ENCODE measurements at regions of chr9 and their contacts with region 1.

Region 1: DNA sequence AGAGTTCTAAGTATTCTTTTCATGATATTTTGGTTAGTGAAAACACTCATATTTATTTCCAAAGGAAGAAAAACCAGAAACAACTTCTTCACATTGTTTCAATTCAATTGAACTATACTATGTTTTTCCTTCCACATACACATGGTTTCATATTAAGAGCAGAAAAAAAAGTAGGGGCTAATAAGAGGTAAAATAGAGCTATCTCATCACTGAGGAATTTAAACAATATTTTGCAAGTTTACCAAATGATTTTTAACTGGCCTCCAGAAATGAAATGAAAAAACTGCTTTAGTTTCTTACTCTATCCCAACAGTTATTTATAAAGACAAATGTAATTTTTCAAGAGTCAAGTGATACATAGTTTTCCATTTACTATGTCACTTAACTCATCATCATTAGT is 233.5 kb downstream of the RFX3 start:
- DNase-seq: no peak
- ATAC-seq: no peak
- H3K4me3 ChIP-seq: no peak overlapping the region
- H3K4me3 Mint-ChIP-seq: no peak overlapping the region
- H3K27ac ChIP-seq: no peak overlapping the region
- H3K27ac Mint-ChIP-seq: peak overlapping the region in 1 of 9 donors; percentile 23
- H3K4me1 ChIP-seq: no peaks in the 10 kb centered on the region
- H3K4me1 Mint-ChIP-seq: peaks cover 0 to 2% (median 0%) of the 10 kb centered on the region in 7 donors
- H3K27me3 ChIP-seq: no peaks in the 10 kb centered on the region
- H3K27me3 Mint-ChIP-seq: no peaks in the 10 kb centered on the region

Region 2: GRCh38 chr9:3235497-3235896 is 56.8 kb before region 1 on chr9:
- CTCF ChIA-PET with region 1: no interaction called
- POLR2A ChIA-PET with region 1: no interaction called
- intact Hi-C with region 1: no loop called
- DNase-seq: no peak
- ATAC-seq: no peak
- H3K4me3 ChIP-seq: no peak overlapping the region
- H3K4me3 Mint-ChIP-seq: no peak overlapping the region
- H3K27ac ChIP-seq: no peak overlapping the region
- H3K27ac Mint-ChIP-seq: no peak overlapping the region
- H3K4me1 ChIP-seq: no peaks in the 10 kb centered on the region
- H3K4me1 Mint-ChIP-seq: peaks cover 0 to 5% (median 0%) of the 10 kb centered on the region in 7 donors
- H3K27me3 ChIP-seq: no peaks in the 10 kb centered on the region
- H3K27me3 Mint-ChIP-seq: no peaks in the 10 kb centered on the region

Region 3: GRCh38 chr9:3277200-3277599 is 15.1 kb before region 1 on chr9:
- CTCF ChIA-PET with region 1: no interaction called
- POLR2A ChIA-PET with region 1: no interaction called
- intact Hi-C with region 1: loop called in 1 of 2 experiments (anchors 2 kb)
- DNase-seq: no peak
- ATAC-seq: no peak
- H3K4me3 ChIP-seq: no peak overlapping the region
- H3K4me3 Mint-ChIP-seq: no peak overlapping the region
- H3K27ac ChIP-seq: no peak overlapping the region
- H3K27ac Mint-ChIP-seq: no peak overlapping the region
- H3K4me1 ChIP-seq: no peaks in the 10 kb centered on the region
- H3K4me1 Mint-ChIP-seq: peaks cover 0 to 6% (median 0%) of the 10 kb centered on the region in 7 donors
- H3K27me3 ChIP-seq: no peaks in the 10 kb centered on the region
- H3K27me3 Mint-ChIP-seq: no peaks in the 10 kb centered on the region

Region 4: DNA sequence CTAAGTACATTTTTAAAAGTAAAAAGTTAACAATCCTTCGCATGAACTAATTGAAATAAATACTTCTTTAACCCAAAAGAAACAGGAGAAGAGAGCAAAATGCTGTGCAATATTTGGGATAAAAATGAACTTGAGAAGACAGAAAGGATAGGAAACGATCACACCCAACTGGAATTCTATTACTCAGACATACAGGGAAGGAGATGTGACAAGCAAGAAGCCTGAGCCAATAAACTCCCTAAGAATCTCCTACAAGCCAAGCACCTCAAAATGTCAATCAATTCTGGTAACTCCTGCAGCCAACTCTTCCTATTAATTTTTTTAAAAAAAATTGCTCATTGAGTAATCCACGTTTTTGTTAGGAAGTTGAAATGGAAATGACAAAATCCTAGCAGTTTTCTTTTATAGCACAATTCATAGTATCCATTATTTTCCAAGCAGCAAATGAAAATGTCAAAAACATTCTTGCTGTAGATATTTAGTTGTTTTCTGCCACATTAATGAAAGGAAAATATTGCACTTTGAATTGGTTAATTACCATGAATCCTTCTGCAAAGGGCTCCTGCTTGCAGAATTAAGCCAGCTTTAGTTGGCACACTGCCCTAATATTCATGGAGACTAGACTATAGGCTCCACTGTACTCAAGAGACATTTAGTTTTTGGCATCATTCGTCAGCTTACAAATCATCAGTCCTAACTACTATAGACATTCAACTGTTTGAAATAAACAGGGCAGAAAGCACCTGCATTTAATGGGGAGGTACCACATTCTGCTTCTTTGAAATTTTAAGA is 144.5 kb after region 1 on chr9:
- CTCF ChIA-PET with region 1: no interaction called
- POLR2A ChIA-PET with region 1: no interaction called
- intact Hi-C with region 1: no loop called
- DNase-seq: no peak
- ATAC-seq: no peak
- H3K4me3 ChIP-seq: no peak overlapping the region
- H3K4me3 Mint-ChIP-seq: no peak overlapping the region
- H3K27ac ChIP-seq: no peak overlapping the region
- H3K27ac Mint-ChIP-seq: no peak overlapping the region
- H3K4me1 ChIP-seq: no peaks in the 10 kb centered on the region
- H3K4me1 Mint-ChIP-seq: peaks cover 3 to 26% (median 11%) of the 10 kb centered on the region in 7 donors
- H3K27me3 ChIP-seq: no peaks in the 10 kb centered on the region
- H3K27me3 Mint-ChIP-seq: no peaks in the 10 kb centered on the region

Measured in naive thymus-derived CD4-positive, alpha-beta T cell (primary cell).